ENCODE measurements at regions of chr17 and their contacts with region 1.

Region 1: GRCh38 chr17:47895856-47896671 is at the start of gene SP2:
- DNase-seq: peak; percentile 100
- ATAC-seq: peak; percentile 91
- H3K4me3 Mint-ChIP-seq: peak within 1 kb of the TSS; percentile 95
- H3K27ac Mint-ChIP-seq: peak within 1 kb of the TSS; percentile 96
- H3K4me1 Mint-ChIP-seq: peaks cover 46% of the 10 kb centered on the region
- H3K27me3 Mint-ChIP-seq: no peaks in the 10 kb centered on the region
- CTCF ChIP-seq: no peak
- total RNA-seq, gene SP2: 11.5 to 13.2 TPM

Region 2: GRCh38 chr17:47850692-47851573 is 45.1 kb before region 1 on chr17 and contains the start of gene SP6:
- CTCF ChIA-PET with region 1: interaction called, 586 read pairs
- POLR2A ChIA-PET with region 1: interaction called, 15 read pairs
- intact Hi-C with region 1: no loop called
- DNase-seq: peak; percentile 83
- ATAC-seq: peak; percentile 93
- H3K4me3 Mint-ChIP-seq: peak within 1 kb of the TSS; percentile 32
- H3K27ac Mint-ChIP-seq: no peak within 1 kb of the TSS
- H3K4me1 Mint-ChIP-seq: peaks cover 16% of the 10 kb centered on the region
- H3K27me3 Mint-ChIP-seq: peaks cover 76% of the 10 kb centered on the region
- CTCF ChIP-seq: no peak
- total RNA-seq, gene SP6: 0.13 to 0.18 TPM

Region 3: GRCh38 chr17:47915776-47916398 is 19.8 kb after region 1 on chr17:
- CTCF ChIA-PET with region 1: no interaction called
- POLR2A ChIA-PET with region 1: interaction called, 10 read pairs
- intact Hi-C with region 1: no loop called
- DNase-seq: no peak
- ATAC-seq: no peak
- H3K4me3 Mint-ChIP-seq: no peak overlapping the region
- H3K27ac Mint-ChIP-seq: no peak overlapping the region
- H3K4me1 Mint-ChIP-seq: peaks cover 3% of the 10 kb centered on the region
- H3K27me3 Mint-ChIP-seq: no peaks in the 10 kb centered on the region
- CTCF ChIP-seq: no peak

Region 4: GRCh38 chr17:47941236-47941994 is 45.4 kb after region 1 on chr17 and contains the start of gene PNPO:
- CTCF ChIA-PET with region 1: interaction called, 9 read pairs
- POLR2A ChIA-PET with region 1: interaction called, 10 read pairs
- intact Hi-C with region 1: no loop called
- DNase-seq: peak; percentile 100
- ATAC-seq: peak; percentile 98
- H3K4me3 Mint-ChIP-seq: peak within 1 kb of the TSS; percentile 84
- H3K27ac Mint-ChIP-seq: peak within 1 kb of the TSS; percentile 88
- H3K4me1 Mint-ChIP-seq: peaks cover 51% of the 10 kb centered on the region
- H3K27me3 Mint-ChIP-seq: no peaks in the 10 kb centered on the region
- CTCF ChIP-seq: no peak
- total RNA-seq, gene PNPO: 41.0 to 42.7 TPM

Region 5: DNA sequence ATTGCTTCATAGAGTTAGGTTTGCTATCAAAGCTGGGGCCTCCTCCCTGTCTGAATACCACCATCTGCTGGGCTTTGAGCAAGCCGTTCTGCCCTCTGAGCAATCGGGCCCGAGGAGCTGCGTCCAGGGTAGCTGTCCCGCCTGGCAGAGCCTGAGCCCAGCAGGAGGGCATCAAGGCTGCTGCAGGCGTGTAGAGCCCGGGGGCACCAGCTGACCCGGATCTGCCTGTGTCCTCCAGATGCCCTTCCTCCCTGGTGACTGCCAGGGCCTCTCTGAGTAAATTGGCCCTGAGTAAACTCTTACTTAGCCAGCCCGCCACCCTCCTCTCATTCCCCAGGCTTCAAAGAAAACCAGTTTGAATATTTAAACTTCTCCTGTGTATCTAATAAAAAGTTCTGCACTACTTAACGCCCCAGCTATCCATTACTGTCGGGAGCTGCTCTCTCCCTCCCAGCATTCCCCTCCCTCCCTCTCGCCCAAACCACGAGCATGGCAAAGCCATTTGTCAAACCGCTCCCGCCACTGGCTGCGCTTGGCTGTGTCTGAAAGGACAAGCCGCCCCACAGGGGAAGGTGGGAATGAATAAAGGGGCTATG is 91.3 kb after region 1 on chr17:
- CTCF ChIA-PET with region 1: no interaction called
- POLR2A ChIA-PET with region 1: no interaction called
- intact Hi-C with region 1: no loop called
- DNase-seq: no peak
- ATAC-seq: no peak
- H3K4me3 Mint-ChIP-seq: no peak overlapping the region
- H3K27ac Mint-ChIP-seq: no peak overlapping the region
- H3K4me1 Mint-ChIP-seq: no peaks in the 10 kb centered on the region
- H3K27me3 Mint-ChIP-seq: no peaks in the 10 kb centered on the region
- CTCF ChIP-seq: no peak

Measured in activated CD8-positive, alpha-beta T cell treated with anti-CD3 and anti-CD28 coated beads for 36 hours (primary cell).